Activated CD4-positive, alpha-beta T cell treated with anti-CD3 and anti-CD28 coated beads for 36 hours (primary cell): ENCODE measurements at regions of chrX and their contacts with region 1.

Region 1: GRCh38 chrX:30735839-30736238 is 82.6 kb downstream of the GK start:
- DNase-seq: peak; percentile 86
- ATAC-seq: peak; percentile 83
- H3K4me3 Mint-ChIP-seq: no peak overlapping the region
- H3K27ac Mint-ChIP-seq: no peak overlapping the region
- H3K4me1 Mint-ChIP-seq: peaks cover 17% of the 10 kb centered on the region
- H3K27me3 Mint-ChIP-seq: no peaks in the 10 kb centered on the region

Region 2: DNA sequence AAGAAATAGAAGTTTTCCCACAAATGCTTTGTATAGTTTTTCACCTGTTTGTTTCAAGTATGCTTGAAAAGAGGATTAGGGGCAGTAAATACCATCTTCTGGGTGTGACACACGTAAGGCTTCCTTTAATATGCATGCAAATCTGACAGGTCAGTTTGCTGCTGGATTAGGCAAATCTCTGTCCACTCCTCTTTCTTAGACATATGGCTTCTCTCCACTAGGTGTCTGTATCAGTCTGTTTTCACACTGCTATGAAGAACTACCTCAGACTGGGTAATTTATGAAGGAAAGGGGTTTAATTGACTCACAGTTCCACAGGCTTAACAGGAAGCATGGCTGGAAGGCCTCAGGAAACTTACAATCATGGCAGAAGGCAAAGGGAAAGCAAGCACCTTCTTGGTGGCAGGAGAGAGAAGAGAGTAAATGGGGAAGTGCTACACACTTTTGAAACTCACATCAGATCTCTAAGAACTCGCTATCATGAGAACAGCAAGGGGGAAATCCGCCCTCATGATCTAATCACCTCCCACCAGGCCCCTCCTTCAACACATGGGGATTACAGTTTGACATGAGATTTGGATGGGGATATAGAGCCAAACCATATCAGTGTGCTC is 86.3 kb after region 1 on chrX:
- CTCF ChIA-PET with region 1: interaction called, 5 read pairs
- POLR2A ChIA-PET with region 1: no interaction called
- intact Hi-C with region 1: loop called in 1 of 2 experiments (anchors 1 kb)
- DNase-seq: no peak
- ATAC-seq: no peak
- H3K4me3 Mint-ChIP-seq: no peak overlapping the region
- H3K27ac Mint-ChIP-seq: no peak overlapping the region
- H3K4me1 Mint-ChIP-seq: peaks cover 18% of the 10 kb centered on the region
- H3K27me3 Mint-ChIP-seq: no peaks in the 10 kb centered on the region

Region 3: DNA sequence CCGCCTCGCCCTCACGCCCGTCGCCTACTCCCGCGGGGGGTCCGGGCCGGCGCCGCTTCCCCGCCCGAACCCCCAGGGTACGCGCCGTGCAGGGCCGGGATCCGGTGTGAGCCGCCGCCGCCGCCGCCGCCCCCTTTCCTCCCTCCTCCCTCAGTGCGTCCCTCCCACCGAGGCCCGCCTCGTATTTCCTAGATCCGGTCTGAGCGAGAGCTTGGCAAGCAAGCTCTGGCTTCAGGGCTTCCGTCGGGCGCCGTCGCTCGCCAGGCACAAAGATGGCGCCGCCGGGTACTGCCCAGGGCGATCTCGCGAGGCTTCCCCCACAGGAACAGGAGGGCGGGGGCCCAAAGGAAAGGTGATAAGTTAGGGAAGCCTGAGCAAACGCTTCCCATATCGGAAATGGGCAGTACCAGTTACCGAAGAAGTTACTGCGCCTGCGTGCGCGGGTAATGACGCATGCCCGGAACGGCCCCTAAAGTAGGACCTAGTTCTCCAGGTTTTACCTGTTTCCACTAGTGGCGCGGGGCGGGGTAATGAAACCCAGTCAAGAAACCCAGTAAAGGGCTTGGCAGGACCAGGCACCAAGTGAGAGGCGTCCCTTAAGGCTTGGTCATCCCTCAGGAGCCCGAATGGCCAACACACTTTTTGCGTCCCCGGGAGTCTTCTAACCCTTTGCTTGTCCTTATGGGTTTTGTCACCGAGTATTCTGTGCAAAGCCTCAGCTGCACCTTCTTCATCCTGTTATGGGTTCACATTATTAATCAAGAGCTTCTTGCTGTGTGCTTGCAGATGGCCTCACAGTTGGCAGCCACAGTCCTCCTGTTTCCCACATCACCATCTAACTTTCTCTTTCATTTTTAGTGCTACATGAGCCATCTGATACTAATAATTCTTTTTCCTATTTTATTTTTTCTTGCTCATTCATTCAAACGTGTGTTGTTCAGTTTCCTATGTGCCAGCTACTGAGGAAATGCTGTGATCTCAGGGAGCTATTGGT is 153.6 kb after region 1 on chrX and contains the start of gene TAB3:
- CTCF ChIA-PET with region 1: interaction called, 7 read pairs
- POLR2A ChIA-PET with region 1: no interaction called
- intact Hi-C with region 1: loop called (anchors 5 kb)
- DNase-seq: peak; percentile 95
- ATAC-seq: peak; percentile 88
- H3K4me3 Mint-ChIP-seq: peak within 1 kb of the TSS; percentile 78
- H3K27ac Mint-ChIP-seq: peak within 1 kb of the TSS; percentile 95
- H3K4me1 Mint-ChIP-seq: peaks cover 39% of the 10 kb centered on the region
- H3K27me3 Mint-ChIP-seq: no peaks in the 10 kb centered on the region
- total RNA-seq, gene TAB3: 18.7 to 20.1 TPM

Region 4: DNA sequence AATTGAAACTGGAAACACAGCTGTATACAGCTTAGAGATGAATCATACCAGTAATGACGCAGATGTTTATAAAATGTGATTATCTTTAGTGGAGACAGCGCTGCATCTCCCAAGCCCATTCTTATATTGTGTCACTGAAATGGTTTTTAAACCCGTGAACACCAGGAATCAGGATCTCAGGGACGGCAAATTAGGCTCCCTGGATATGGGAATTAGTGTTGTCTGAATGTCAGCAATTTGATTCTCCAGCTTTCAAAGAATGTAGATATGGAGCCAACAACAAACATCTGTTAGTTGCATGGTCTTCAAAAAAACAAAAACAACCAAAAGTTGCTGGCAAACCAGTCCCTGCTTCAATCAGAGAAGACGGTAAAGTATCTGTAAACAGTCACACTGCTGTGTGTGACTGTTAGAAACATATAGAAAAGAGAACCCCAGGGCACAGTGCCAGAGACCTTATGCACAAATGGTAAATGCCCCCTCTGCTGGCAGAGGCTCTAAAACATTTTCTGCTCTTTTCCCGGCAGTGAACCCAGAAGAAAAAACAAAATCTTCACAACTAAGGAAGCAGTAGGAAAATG is 687.9 kb after region 1 on chrX:
- CTCF ChIA-PET with region 1: no interaction called
- POLR2A ChIA-PET with region 1: no interaction called
- intact Hi-C with region 1: loop called in 1 of 2 experiments (anchors 5 kb)
- DNase-seq: peak; percentile 33
- ATAC-seq: no peak
- H3K4me3 Mint-ChIP-seq: no peak overlapping the region
- H3K27ac Mint-ChIP-seq: no peak overlapping the region
- H3K4me1 Mint-ChIP-seq: no peaks in the 10 kb centered on the region
- H3K27me3 Mint-ChIP-seq: no peaks in the 10 kb centered on the region

Region 5: DNA sequence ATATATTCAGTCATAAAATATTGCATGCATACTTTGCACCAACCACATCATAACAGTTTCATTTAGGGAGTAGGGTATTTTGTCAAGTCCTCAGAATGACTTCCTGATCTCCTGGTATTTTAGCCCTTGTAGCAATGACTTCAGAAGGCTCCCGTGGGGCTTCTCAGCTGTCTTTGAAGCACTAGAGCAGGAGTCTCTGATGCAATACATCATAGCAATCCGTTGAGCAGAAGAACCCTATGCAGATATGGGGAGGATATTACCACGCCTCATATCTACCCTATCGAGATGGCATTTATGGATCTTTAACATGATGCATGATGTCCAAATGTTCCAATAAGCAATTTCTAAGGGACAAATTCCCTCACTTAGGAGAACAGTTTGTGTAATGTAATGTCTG is 709.7 kb after region 1 on chrX:
- CTCF ChIA-PET with region 1: no interaction called
- POLR2A ChIA-PET with region 1: no interaction called
- intact Hi-C with region 1: no loop called
- DNase-seq: no peak
- ATAC-seq: no peak
- H3K4me3 Mint-ChIP-seq: no peak overlapping the region
- H3K27ac Mint-ChIP-seq: no peak overlapping the region
- H3K4me1 Mint-ChIP-seq: peaks cover 2% of the 10 kb centered on the region
- H3K27me3 Mint-ChIP-seq: no peaks in the 10 kb centered on the region